Left cardiac atrium (tissue), 4 donors: ENCODE measurements at regions of chr4 and their contacts with region 1.

Region 1: GRCh38 chr4:12488672-12489071 is 995.5 kb downstream of the RAB28 start:
- DNase-seq: peak; percentile 68
- ATAC-seq: peak; percentile 96 to 97

Region 2: DNA sequence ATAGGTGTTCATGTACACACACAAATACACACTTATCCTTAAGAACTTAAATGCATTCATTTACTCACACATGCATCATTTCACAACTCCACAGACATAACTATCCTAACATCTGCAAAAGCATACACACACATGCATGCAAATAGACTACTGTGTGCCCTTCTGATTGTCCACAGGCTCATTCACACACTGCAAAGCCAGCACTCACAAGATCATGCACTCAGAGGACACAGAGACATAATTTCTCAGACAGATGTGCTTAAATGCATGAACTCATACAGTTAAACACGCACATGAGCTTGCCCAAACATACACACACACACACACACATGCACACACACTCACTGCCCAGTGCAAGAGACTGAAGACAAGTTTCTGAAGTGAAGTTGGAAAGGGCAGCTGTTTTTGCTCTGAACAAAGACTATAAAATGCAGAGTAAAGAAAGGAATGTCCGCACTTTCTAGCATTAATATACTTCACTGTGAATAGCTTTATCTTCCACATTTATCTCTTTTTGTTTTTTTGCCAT is 42.0 kb before region 1 on chr4:
- intact Hi-C with region 1: loop called in 1 of 2 experiments (anchors 2 kb)
- DNase-seq: no peak
- ATAC-seq: peak in 1 of 2 donors; percentile 29

Region 3: GRCh38 chr4:13399257-13399656 is 910.6 kb after region 1 on chr4:
- intact Hi-C with region 1: no loop called
- DNase-seq: no peak
- ATAC-seq: peak; percentile 66 to 71